ENCODE measurements at regions of chr14 and their contacts with region 1.

Region 1: DNA sequence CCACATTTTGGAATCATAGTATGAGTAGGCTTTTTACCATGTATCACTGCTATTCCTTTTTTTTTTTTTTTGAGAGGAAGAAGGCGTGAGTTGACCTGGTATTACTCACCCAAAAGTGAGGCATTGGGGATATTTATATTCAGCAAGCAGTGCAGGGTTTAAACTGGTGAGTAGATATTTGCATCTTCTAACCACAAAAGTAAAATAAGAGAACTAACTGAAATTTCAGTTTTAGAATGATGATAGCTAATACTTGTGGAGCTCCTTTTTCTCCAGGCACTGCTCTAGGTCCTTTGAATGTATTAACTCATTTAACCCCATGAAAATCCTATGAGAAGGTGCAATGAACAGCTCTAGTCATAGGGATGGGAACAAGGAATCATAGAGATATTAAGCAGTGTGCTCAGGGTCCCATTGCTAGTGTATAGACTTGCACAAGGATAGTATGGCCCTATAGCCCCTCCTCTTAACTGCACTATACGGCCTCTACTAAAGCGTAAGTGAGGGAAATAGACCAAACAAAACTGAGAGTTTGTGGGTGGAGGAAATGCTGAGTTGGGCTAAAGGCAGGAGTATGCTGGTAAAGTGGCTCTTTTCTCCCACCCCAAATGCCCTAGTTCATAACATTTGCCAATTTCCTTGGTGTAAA is 104.3 kb upstream of the MAX start:
- DNase-seq: no peak
- H3K4me3 Mint-ChIP-seq: peak overlapping the region; percentile 64
- H3K27ac Mint-ChIP-seq: peak overlapping the region; percentile 91
- H3K4me1 Mint-ChIP-seq: peaks cover 61% of the 10 kb centered on the region
- H3K27me3 Mint-ChIP-seq: no peaks in the 10 kb centered on the region

Region 2: GRCh38 chr14:65102441-65103149 is 104.0 kb before region 1 on chr14 and contains the start of gene MAX:
- intact Hi-C with region 1: loop called (anchors 2 kb)
- DNase-seq: peak; percentile 99
- H3K4me3 Mint-ChIP-seq: peak within 1 kb of the TSS; percentile 92
- H3K27ac Mint-ChIP-seq: peak within 1 kb of the TSS; percentile 94
- H3K4me1 Mint-ChIP-seq: peaks cover 40% of the 10 kb centered on the region
- H3K27me3 Mint-ChIP-seq: peaks cover 6% of the 10 kb centered on the region
- total RNA-seq, gene MAX: 113 and 115 TPM in 2 replicates

Region 3: GRCh38 chr14:65131301-65131701 is 75.3 kb before region 1 on chr14:
- intact Hi-C with region 1: no loop called
- DNase-seq: no peak
- H3K4me3 Mint-ChIP-seq: no peak overlapping the region
- H3K27ac Mint-ChIP-seq: no peak overlapping the region
- H3K4me1 Mint-ChIP-seq: peaks cover 3% of the 10 kb centered on the region
- H3K27me3 Mint-ChIP-seq: peaks cover 11% of the 10 kb centered on the region

Region 4: GRCh38 chr14:65179918-65180724 is 26.5 kb before region 1 on chr14:
- intact Hi-C with region 1: loop called (anchors 2 kb)
- DNase-seq: no peak
- H3K4me3 Mint-ChIP-seq: no peak overlapping the region
- H3K27ac Mint-ChIP-seq: peak overlapping the region; percentile 16
- H3K4me1 Mint-ChIP-seq: peaks cover 18% of the 10 kb centered on the region
- H3K27me3 Mint-ChIP-seq: no peaks in the 10 kb centered on the region

Region 5: GRCh38 chr14:65287264-65288131 is 80.9 kb after region 1 on chr14:
- intact Hi-C with region 1: loop called (anchors 1 kb)
- DNase-seq: peak; percentile 52
- H3K4me3 Mint-ChIP-seq: peak overlapping the region; percentile 62
- H3K27ac Mint-ChIP-seq: peak overlapping the region; percentile 96
- H3K4me1 Mint-ChIP-seq: peaks cover 66% of the 10 kb centered on the region
- H3K27me3 Mint-ChIP-seq: no peaks in the 10 kb centered on the region

Region 6: DNA sequence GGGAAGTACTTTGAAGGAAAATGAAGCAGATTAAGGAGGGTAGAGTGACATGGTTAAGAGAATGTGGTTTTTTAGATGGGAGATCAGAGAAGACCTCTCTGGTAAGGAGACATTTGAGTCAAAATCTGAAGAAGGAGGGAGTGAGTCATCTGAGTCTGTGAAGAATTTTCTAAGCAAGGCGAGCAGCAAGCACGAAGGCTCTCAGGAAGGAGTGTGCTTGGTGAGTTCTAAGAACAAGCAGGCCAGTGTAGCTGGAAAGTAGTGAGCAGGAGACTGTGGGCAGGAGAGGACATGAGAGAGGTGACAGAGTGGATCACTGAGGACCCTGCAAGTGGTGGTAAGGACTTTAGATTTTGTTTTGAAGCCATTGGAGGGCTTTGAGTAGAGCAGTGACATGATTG is 129.6 kb after region 1 on chr14:
- intact Hi-C with region 1: loop called (anchors 1 kb)
- DNase-seq: peak; percentile 56
- H3K4me3 Mint-ChIP-seq: peak overlapping the region; percentile 87
- H3K27ac Mint-ChIP-seq: peak overlapping the region; percentile 94
- H3K4me1 Mint-ChIP-seq: peaks cover 56% of the 10 kb centered on the region
- H3K27me3 Mint-ChIP-seq: no peaks in the 10 kb centered on the region

Region 7: GRCh38 chr14:65704850-65705249 is 498.3 kb after region 1 on chr14:
- intact Hi-C with region 1: loop called (anchors 10 kb)
- DNase-seq: no peak
- H3K4me3 Mint-ChIP-seq: no peak overlapping the region
- H3K27ac Mint-ChIP-seq: no peak overlapping the region
- H3K4me1 Mint-ChIP-seq: peaks cover 6% of the 10 kb centered on the region
- H3K27me3 Mint-ChIP-seq: no peaks in the 10 kb centered on the region

Region 8: DNA sequence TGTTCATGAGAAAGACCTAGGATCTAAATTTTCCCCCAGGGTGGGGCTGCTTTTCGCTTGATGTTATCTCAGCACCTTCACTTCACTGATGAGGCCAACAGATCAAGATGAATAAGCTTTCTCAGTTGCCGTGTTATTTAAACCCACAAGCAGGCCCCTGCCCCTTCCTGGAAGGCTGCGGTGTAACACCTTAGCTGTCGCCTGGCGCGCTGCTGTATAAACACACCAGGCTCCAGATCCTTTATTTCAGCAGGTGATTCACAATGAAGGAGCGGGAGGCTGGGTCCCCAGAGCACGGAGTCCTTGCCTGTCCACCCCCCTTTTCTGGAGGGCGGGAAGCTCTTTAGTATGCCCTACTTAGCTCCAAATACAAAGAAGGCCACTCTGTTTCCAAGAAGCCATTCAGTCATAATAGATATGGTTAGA is 721.4 kb after region 1 on chr14:
- intact Hi-C with region 1: loop called (anchors 5 kb)
- DNase-seq: peak; percentile 81
- H3K4me3 Mint-ChIP-seq: peak overlapping the region; percentile 59
- H3K27ac Mint-ChIP-seq: peak overlapping the region; percentile 83
- H3K4me1 Mint-ChIP-seq: peaks cover 62% of the 10 kb centered on the region
- H3K27me3 Mint-ChIP-seq: no peaks in the 10 kb centered on the region